Astrocyte of the cerebellum (primary cell): ENCODE measurements at regions of chrX and their contacts with region 1.

Region 1: GRCh38 chrX:97290199-97290598 is 406.5 kb downstream of the RPA4 start:
- DNase-seq: no peak
- H3K4me3 ChIP-seq: no peak overlapping the region
- CTCF ChIP-seq: no peak

Region 2: DNA sequence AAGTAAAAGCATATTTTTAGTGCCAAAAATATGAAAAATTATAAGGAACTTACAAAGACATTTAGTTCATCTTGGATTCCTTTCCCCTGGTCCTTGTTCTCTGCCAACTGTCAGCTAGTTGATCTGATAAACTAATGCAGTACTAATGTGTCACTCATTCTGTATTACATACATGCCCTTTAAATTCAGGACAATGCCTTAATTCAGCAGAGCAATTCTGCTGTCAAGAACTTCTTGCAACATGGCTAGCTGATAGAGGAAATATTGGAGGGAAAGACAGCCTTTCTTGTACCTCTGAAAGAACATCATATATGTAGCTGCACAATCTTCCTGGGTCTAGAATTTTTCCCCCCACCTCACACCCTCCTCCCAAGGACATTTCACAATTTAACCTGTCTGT is 73.6 kb after region 1 on chrX:
- in situ Hi-C with region 1: loop called (anchors 5 kb)
- DNase-seq: no peak
- H3K4me3 ChIP-seq: no peak overlapping the region
- CTCF ChIP-seq: no peak